Right cardiac atrium (tissue), 5 donors: ENCODE measurements at regions of chr11 and their contacts with region 1.

Region 1: DNA sequence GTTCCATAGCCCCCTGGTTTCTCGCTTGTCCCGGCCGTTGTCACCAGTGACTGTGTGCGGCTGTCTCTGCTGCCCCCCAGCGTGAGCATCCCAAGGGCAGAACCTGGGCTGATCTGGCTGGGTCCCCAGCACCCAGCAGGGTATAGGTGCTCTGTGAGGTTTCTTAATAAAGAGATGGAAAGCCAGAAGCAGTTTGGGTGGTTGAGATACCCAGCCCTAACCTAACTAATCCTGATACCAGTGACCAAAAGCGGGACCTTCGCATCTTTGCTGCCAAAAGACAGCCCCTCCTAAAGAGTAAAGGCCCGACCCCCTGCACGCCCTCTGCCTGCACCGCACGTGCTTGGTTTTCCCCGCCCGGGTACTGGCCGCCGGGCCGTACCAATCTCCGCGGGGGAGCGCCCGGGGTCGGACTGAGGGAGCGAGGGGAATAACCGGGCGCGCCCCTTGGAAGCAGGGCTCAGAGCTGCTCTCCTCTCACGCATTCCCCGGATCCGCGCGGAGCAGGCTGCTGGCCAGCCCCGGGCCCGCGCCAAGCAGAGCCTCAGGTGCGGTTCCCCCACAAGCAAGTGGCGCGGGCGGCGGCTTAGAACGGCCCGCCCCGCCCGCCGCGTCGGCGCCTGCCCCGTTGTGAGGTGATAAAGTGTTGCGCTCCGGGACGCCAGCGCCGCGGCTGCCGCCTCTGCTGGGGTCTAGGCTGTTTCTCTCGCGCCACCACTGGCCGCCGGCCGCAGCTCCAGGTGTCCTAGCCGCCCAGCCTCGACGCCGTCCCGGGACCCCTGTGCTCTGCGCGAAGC is at the start of gene DGAT2:
- DNase-seq: peak; percentile 83 to 94 (median 93)
- ATAC-seq: peak; percentile 91 to 95
- H3K4me3 ChIP-seq: peak within 1 kb of the TSS; percentile 31
- H3K27ac ChIP-seq: no peak within 1 kb of the TSS
- H3K4me1 ChIP-seq: peaks cover 2% of the 10 kb centered on the region
- H3K27me3 ChIP-seq: no peaks in the 10 kb centered on the region
- total RNA-seq, gene DGAT2: 5.7 to 18.0 (median 10.4) TPM

Region 2: DNA sequence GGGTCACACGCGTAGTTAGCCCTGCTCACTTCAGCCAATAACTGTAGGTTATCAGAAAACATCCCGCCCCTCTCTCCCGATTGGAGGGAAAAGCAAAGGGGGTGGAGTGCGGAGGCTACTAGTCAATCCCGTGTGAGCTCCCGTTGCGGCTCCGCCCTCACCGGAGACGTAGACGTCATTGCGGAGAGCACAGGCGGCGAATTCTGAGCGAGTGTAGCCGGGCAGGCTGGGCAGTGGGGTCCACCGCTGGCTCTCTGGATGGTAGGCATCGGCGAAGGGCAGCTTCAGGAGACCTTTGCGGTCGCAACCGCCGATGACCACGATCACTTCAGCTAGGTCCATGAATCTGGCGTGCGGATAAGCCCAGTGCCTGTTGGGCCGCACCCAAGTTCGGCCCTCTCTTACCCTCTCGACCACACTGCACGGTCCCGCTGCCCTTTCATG is 340.0 kb before region 1 on chr11:
- intact Hi-C with region 1: no loop called
- DNase-seq: peak; percentile 94 to 99 (median 95)
- ATAC-seq: peak; percentile 92 to 94
- H3K4me3 ChIP-seq: peak overlapping the region; percentile 25
- H3K27ac ChIP-seq: peak overlapping the region; percentile 26
- H3K4me1 ChIP-seq: peaks cover 7% of the 10 kb centered on the region
- H3K27me3 ChIP-seq: no peaks in the 10 kb centered on the region

Region 3: GRCh38 chr11:75465701-75466531 is 302.4 kb before region 1 on chr11:
- intact Hi-C with region 1: no loop called
- DNase-seq: no peak
- ATAC-seq: peak in 1 of 2 donors; percentile 23
- H3K4me3 ChIP-seq: no peak overlapping the region
- H3K27ac ChIP-seq: no peak overlapping the region
- H3K4me1 ChIP-seq: peaks cover 7% of the 10 kb centered on the region
- H3K27me3 ChIP-seq: no peaks in the 10 kb centered on the region

Region 4: GRCh38 chr11:75706260-75706729 is 62.0 kb before region 1 on chr11:
- intact Hi-C with region 1: loop called in 2 of 4 experiments (anchors 5 to 10 kb)
- DNase-seq: peak; percentile 79 to 84 (median 81)
- ATAC-seq: peak; percentile 94 to 96
- H3K4me3 ChIP-seq: no peak overlapping the region
- H3K27ac ChIP-seq: no peak overlapping the region
- H3K4me1 ChIP-seq: no peaks in the 10 kb centered on the region
- H3K27me3 ChIP-seq: no peaks in the 10 kb centered on the region

Region 5: DNA sequence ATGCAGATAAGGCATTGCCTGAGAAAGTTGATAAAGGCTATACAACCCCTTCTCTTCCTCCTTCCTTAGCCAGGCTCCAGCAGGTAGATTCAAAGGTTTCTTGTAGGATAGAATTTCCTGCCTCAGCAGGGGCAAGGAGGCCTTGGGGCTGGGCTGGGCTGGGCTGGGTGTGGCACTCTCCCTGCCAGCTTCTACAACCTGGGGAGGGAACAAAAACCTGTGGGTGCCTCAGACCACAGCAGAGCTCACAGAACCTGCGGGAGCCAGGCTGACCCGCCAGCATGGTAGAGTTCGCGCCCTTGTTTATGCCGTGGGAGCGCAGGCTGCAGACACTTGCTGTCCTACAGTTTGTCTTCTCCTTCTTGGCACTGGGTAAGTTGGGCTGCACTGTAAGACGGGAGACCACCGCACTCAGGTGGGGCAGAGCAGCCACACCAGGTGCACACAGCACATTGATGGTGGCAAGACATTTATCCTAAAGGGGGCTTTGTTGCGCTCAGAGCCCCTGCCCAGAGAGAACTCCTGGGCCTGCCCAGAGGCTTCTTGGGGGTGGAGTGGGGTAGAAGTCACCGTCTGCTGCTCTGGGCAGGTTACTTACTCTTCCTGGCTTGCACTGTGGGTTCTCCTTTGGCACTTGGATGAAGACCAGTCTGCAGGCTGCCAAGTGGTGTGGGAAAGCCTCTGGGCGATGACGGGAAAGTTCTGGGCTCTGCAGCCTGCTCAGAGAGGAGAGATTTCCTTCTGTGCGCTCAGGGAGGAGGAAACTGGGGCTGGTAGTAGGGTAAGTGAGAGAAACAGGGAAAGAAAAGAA is 50.5 kb before region 1 on chr11 and contains the start of gene MOGAT2:
- intact Hi-C with region 1: loop called in 1 of 4 experiments (anchors 10 kb)
- DNase-seq: no peak
- ATAC-seq: no peak
- H3K4me3 ChIP-seq: no peak within 1 kb of the TSS
- H3K27ac ChIP-seq: no peak within 1 kb of the TSS
- H3K4me1 ChIP-seq: no peaks in the 10 kb centered on the region
- H3K27me3 ChIP-seq: no peaks in the 10 kb centered on the region
- total RNA-seq, gene MOGAT2: 0.17 TPM in 1 of 4 donors, not detected in the others

Region 6: DNA sequence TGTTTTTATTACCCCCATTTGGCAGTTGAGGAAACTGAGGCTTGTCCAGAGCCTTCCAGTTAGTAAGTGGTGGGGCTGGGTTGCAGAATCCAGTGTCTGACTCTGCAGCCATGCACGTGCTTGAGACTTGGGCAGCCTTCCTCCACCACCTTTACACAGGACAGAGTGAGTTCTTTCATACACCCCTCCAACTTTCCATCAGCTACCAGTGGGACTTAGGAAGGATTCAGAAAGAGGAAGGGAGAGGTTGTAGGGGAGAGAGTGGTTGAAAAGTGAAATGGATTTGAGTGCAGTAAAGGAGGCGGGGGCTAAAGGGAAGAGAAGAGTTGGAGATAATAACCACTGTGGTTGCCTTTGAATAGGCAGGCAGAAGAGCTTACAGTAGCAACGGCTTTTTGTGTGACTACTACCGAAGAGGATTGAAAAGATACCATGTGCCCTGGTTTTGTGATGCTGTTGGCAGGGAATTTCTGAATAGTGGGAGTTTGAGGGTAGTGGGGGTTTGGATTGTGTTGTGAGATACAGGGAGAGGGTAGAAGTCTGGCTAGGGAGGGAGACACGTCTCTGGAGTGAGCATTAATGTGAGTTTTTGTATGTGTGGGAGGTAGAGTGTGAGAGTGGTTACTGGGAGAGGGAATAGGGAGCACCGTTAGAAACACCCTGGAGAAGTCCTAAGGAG is 48.4 kb after region 1 on chr11:
- intact Hi-C with region 1: no loop called
- DNase-seq: no peak
- ATAC-seq: no peak
- H3K4me3 ChIP-seq: peak overlapping the region; percentile 67
- H3K27ac ChIP-seq: no peak overlapping the region
- H3K4me1 ChIP-seq: peaks cover 10% of the 10 kb centered on the region
- H3K27me3 ChIP-seq: no peaks in the 10 kb centered on the region